GM18951 (cell line): ENCODE measurements at regions of chr19 and their contacts with region 1.

Region 1: DNA sequence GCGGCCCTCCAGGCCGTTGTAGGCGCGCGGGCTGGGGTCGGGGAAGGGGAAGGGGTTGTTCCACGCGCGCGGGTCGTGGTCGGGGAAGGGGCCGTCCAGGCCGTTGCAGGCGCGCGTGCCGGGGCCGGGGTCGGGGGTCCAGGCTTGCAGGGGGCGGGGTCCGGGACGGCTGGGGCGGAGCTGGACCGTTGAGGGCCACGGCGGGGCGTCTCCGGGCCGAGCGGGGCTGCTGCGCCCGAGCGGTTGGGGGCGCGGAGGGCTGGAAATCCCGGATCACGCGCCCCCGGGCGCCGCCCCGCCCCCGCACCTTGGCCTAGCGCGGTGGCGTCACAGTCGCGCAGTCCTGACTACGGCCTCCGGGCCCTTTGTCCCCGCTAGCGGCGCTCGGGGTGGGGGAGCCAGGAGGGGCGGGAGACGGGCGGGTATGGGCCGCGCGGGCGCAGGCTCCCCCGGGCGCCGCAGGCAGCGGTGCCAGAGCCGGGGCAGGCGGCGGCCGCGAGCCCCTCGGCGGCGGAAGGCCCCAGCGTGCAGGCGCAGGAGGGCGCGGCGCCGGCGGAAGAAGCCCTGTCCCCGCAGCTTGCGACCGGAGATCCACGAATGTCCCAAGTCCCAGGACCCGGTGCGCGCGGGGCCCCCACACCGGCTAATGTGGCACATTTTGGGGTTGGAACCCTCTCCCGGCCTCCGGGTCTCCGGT is 665 bp downstream of the GPX4 start:
- POLR2A ChIP-seq: peak; percentile 14

Region 2: GRCh38 chr19:1046836-1047695 is 57.4 kb before region 1 on chr19:
- in situ Hi-C with region 1: no loop called
- POLR2A ChIP-seq: no peak

Region 3: DNA sequence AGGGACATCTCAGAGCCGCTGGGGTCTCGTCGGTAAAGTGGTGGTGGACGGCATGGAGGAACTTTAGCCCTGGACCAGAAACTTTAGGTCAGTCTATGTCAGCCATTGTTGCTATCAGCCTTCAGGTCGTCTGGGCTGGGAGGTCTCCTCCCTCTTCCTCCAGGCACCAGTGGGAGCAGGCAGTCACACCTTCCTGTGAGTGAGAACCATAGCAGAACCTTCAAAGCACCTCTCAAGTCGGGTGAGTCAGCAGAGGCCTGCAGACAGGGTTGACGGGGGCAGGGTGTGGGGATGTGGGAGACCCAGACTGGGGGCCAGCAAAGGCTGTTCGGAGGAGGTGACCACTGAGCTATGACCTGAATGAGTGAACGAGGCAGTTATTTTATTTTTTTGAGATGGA is 85.0 kb after region 1 on chr19:
- in situ Hi-C with region 1: loop called (anchors 5 kb)
- POLR2A ChIP-seq: no peak